Naive thymus-derived CD8-positive, alpha-beta T cell (primary cell): ENCODE measurements at regions of chr1 and their contacts with region 1.

Region 1: DNA sequence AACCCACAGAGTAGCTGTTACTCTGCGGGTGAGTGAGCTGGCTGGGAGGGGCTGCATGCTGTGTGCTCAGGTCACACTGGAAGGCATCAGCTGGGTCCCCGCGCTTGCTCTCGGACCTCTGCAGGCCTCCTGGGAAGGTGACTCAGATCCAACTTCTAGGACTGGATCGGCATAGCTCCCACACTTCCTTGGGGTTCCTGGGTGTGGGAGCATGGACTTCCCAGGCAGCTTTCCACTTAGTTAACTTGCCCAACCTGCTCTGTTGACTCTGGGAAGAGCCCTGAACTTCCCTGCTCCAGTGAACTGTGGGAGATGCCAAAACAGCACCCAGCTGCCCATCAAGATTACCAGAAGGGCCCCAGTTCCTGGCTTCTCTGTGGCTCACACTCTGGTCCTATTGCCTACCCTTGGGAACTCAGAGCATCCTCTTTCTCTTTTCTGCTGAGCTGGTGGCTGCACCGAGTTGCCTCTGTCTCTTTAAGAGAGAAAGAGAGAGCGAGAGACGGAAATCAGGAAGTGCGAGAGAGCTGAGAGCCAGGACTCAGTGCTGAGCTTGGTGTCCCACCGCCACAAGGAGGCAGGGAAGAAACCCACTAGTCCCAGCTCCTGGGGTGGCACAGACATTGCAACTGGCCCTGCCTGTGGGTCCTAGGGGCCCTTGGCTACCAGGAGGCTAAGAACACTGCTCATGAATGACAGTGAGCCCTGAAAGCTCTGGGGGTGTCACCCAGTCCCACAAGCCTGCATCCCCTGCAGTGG is at the start of gene IKBKE:
- DNase-seq: peak in 9 of 10 donors; percentile 17 to 71 (median 43)
- ATAC-seq: peak; percentile 57 to 66
- H3K4me3 Mint-ChIP-seq: peak within 1 kb of the TSS; percentile 86 to 98 (median 94)
- H3K27ac Mint-ChIP-seq: peak within 1 kb of the TSS; percentile 88 to 96 (median 92)
- H3K4me1 Mint-ChIP-seq: peaks cover 57 to 85% (median 83%) of the 10 kb centered on the region in 4 donors
- H3K27me3 Mint-ChIP-seq: no peaks in the 10 kb centered on the region
- polyA plus RNA-seq, gene IKBKE: 40.5 to 57.0 (median 55.5) TPM

Region 2: GRCh38 chr1:206507284-206508129 is 37.4 kb after region 1 on chr1 and contains the start of gene RASSF5:
- POLR2A ChIA-PET with region 1: interaction called, 18 read pairs
- DNase-seq: peak; percentile 65 to 89 (median 75)
- ATAC-seq: peak; percentile 88 to 92
- H3K4me3 Mint-ChIP-seq: peak within 1 kb of the TSS; percentile 72 to 91 (median 80)
- H3K27ac Mint-ChIP-seq: peak within 1 kb of the TSS in 9 of 10 donors; percentile 32 to 75 (median 55)
- H3K4me1 Mint-ChIP-seq: peaks cover 14 to 48% (median 40%) of the 10 kb centered on the region in 4 donors
- H3K27me3 Mint-ChIP-seq: peaks cover 9 to 29% (median 14%) of the 10 kb centered on the region in 5 donors
- polyA plus RNA-seq, gene RASSF5: 233 to 358 (median 291) TPM